ENCODE measurements at regions of chr7 and their contacts with region 1.

Region 1: GRCh38 chr7:100132697-100133151 is 6.0 kb downstream of the MBLAC1 start:
- DNase-seq: peak; percentile 78
- ATAC-seq: peak; percentile 81
- H3K4me3 Mint-ChIP-seq: no peak overlapping the region
- H3K27ac Mint-ChIP-seq: no peak overlapping the region
- H3K4me1 Mint-ChIP-seq: peaks cover 30% of the 10 kb centered on the region
- H3K27me3 Mint-ChIP-seq: no peaks in the 10 kb centered on the region

Region 2: GRCh38 chr7:99551767-99552463 is 580.8 kb before region 1 on chr7 and contains the start of gene FAM200A:
- CTCF ChIA-PET with region 1: no interaction called
- DNase-seq: peak; percentile 90
- ATAC-seq: peak; percentile 99
- H3K4me3 Mint-ChIP-seq: peak within 1 kb of the TSS; percentile 86
- H3K27ac Mint-ChIP-seq: peak within 1 kb of the TSS; percentile 88
- H3K4me1 Mint-ChIP-seq: peaks cover 29% of the 10 kb centered on the region
- H3K27me3 Mint-ChIP-seq: no peaks in the 10 kb centered on the region
- total RNA-seq, gene FAM200A: 5.1 to 5.2 TPM

Region 3: GRCh38 chr7:100081535-100082102 is 51.1 kb before region 1 on chr7 and contains the start of gene ZNF3:
- CTCF ChIA-PET with region 1: interaction called, 11 read pairs
- DNase-seq: peak; percentile 99
- ATAC-seq: peak; percentile 91
- H3K4me3 Mint-ChIP-seq: peak within 1 kb of the TSS; percentile 88
- H3K27ac Mint-ChIP-seq: peak within 1 kb of the TSS; percentile 87
- H3K4me1 Mint-ChIP-seq: peaks cover 32% of the 10 kb centered on the region
- H3K27me3 Mint-ChIP-seq: no peaks in the 10 kb centered on the region
- total RNA-seq, gene ZNF3: 21.2 to 24.1 TPM

Region 4: GRCh38 chr7:100148559-100149350 is 16.0 kb after region 1 on chr7 and contains the start of gene LAMTOR4:
- CTCF ChIA-PET with region 1: interaction called, 37 read pairs
- DNase-seq: peak; percentile 100
- ATAC-seq: peak; percentile 99
- H3K4me3 Mint-ChIP-seq: peak within 1 kb of the TSS; percentile 94
- H3K27ac Mint-ChIP-seq: peak within 1 kb of the TSS; percentile 98
- H3K4me1 Mint-ChIP-seq: peaks cover 37% of the 10 kb centered on the region
- H3K27me3 Mint-ChIP-seq: no peaks in the 10 kb centered on the region
- total RNA-seq, gene LAMTOR4: 119 to 151 TPM

Region 5: GRCh38 chr7:100208911-100209408 is 76.2 kb after region 1 on chr7:
- CTCF ChIA-PET with region 1: interaction called, 43 read pairs
- DNase-seq: peak; percentile 88
- ATAC-seq: peak; percentile 89
- H3K4me3 Mint-ChIP-seq: peak overlapping the region; percentile 40
- H3K27ac Mint-ChIP-seq: peak overlapping the region; percentile 77
- H3K4me1 Mint-ChIP-seq: peaks cover 48% of the 10 kb centered on the region
- H3K27me3 Mint-ChIP-seq: no peaks in the 10 kb centered on the region

Region 6: GRCh38 chr7:100346921-100347320 is 214.2 kb after region 1 on chr7:
- CTCF ChIA-PET with region 1: interaction called, 13 read pairs
- DNase-seq: no peak
- ATAC-seq: no peak
- H3K4me3 Mint-ChIP-seq: no peak overlapping the region
- H3K27ac Mint-ChIP-seq: peak overlapping the region; percentile 50
- H3K4me1 Mint-ChIP-seq: peaks cover 54% of the 10 kb centered on the region
- H3K27me3 Mint-ChIP-seq: no peaks in the 10 kb centered on the region